WTC11 (cell line): ENCODE measurements at regions of chrX and their contacts with region 1.

Region 1: DNA sequence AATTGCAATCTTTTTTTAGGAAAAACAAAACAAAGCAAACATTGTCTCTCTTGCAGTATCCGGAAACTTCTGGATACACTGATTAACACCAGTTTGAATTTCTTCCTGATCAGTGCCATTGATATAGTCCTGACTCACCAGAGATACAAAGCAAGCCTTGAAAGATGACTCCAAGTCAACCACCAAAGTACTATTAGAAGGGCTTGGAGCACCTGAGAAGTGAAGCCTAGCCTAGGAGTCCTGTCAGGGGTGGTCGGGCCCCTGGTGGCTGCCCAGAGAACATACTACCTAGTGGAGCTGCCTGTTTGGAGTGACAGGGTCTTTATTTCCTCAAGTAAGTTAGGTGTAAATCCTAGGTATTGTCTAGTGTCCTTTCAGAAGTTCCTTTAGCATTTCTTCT is 593.2 kb downstream of the ZNF674 start:
- DNase-seq: peak; percentile 17
- ATAC-seq: peak; percentile 88
- H3K4me3 Mint-ChIP-seq: no peak overlapping the region
- H3K27ac Mint-ChIP-seq: no peak overlapping the region
- H3K4me1 Mint-ChIP-seq: peaks cover 10% of the 10 kb centered on the region
- H3K27me3 Mint-ChIP-seq: no peaks in the 10 kb centered on the region
- CTCF ChIP-seq: no peak

Region 2: GRCh38 chrX:45801554-45801953 is 150.5 kb before region 1 on chrX:
- CTCF ChIA-PET with region 1: interaction called, 10 read pairs
- POLR2A ChIA-PET with region 1: no interaction called
- DNase-seq: no peak
- ATAC-seq: peak; percentile 43; the same call in 1 of the 2 replicates
- H3K4me3 Mint-ChIP-seq: peak overlapping the region; percentile 20
- H3K27ac Mint-ChIP-seq: peak overlapping the region; percentile 79
- H3K4me1 Mint-ChIP-seq: peaks cover 84% of the 10 kb centered on the region
- H3K27me3 Mint-ChIP-seq: no peaks in the 10 kb centered on the region
- CTCF ChIP-seq: no peak

Region 3: DNA sequence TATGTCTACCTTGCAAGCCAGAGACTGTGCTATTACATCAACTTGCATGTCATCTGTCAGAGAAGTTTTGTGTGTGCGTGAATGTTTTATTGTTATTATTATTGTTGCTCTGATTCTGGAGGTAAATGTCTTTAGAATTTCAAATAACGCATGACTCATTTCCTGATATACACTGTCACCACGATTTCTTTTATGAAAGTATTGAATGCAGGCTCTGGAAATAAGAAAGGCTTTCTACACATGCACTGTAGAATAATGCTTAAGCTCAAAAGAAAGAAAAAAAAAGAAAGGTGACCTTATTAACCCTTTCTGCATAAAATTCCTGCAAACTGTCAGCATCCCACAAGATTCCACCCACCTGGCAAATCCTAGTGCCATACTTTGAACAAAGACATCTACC is 39.7 kb before region 1 on chrX:
- CTCF ChIA-PET with region 1: no interaction called
- POLR2A ChIA-PET with region 1: no interaction called
- DNase-seq: no peak
- ATAC-seq: no peak
- H3K4me3 Mint-ChIP-seq: no peak overlapping the region
- H3K27ac Mint-ChIP-seq: no peak overlapping the region
- H3K4me1 Mint-ChIP-seq: peaks cover 27% of the 10 kb centered on the region
- H3K27me3 Mint-ChIP-seq: no peaks in the 10 kb centered on the region; the same call in 1 of the 2 replicates
- CTCF ChIP-seq: no peak